Activated naive CD4-positive, alpha-beta T cell treated with anti-CD3 and anti-CD28 coated beads for 36 hours (primary cell): ENCODE measurements at regions of chr13 and their contacts with region 1.

Region 1: DNA sequence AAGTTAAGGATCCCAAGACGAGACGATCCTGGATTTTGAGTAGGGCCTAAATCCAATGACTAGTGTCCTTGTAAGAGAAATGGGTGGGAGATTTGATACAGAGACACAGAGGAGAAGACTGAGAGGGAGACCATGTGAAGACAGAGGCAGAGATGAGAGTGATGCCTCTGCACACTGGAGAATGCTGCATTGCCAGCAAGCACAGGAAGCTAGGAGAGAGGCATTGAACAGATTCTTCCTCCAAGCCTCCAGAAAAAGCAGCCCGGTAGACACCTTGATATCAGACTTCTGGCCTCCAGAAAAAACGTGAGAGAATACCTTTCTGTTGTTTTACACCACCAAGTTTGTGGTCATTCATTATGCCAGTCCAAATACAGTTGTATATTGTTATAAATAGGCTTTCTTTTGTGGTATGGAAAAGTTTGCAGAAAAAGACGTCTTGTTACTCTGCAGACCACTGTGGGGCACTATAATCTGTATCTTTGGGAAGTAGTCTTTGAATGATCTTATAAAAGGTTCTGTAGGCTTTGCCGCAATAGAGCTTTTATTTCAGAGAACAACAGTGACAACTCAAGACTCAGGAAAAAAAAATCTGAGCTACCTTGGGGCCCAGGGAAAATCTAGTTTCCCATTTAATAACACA is 17.9 kb upstream of the RFC3 start:
- DNase-seq: no peak
- H3K4me3 Mint-ChIP-seq: no peak overlapping the region
- H3K27ac Mint-ChIP-seq: no peak overlapping the region
- H3K4me1 Mint-ChIP-seq: peaks cover 7% of the 10 kb centered on the region
- H3K27me3 Mint-ChIP-seq: peaks cover 6% of the 10 kb centered on the region

Region 2: DNA sequence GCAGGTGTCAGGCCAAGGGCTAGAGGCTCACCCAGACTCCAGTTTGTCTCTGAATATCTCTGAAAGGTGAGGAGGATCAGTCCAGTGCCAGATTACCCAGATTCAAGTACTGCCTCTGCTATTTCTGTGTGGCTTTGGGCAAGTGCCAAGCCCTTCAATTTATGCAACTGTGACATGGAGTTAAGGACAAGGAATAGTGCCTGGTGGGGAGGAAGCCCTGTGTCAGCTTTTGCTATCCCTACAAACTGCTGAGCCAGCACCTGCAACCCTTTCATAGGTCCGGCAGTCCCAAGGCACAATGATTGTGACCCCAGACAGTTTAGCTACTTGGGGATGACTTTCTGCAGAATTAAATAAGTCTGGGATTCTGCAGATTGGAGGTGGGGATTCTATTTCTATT is 660.9 kb before region 1 on chr13:
- CTCF ChIA-PET with region 1: no interaction called
- intact Hi-C with region 1: no loop called
- DNase-seq: no peak
- H3K4me3 Mint-ChIP-seq: no peak overlapping the region
- H3K27ac Mint-ChIP-seq: no peak overlapping the region
- H3K4me1 Mint-ChIP-seq: no peaks in the 10 kb centered on the region
- H3K27me3 Mint-ChIP-seq: peaks cover 11% of the 10 kb centered on the region

Region 3: GRCh38 chr13:34076943-34077703 is 277.1 kb after region 1 on chr13:
- CTCF ChIA-PET with region 1: no interaction called
- intact Hi-C with region 1: loop called (anchors 5 kb)
- DNase-seq: no peak
- H3K4me3 Mint-ChIP-seq: no peak overlapping the region
- H3K27ac Mint-ChIP-seq: no peak overlapping the region
- H3K4me1 Mint-ChIP-seq: no peaks in the 10 kb centered on the region
- H3K27me3 Mint-ChIP-seq: no peaks in the 10 kb centered on the region

Region 4: DNA sequence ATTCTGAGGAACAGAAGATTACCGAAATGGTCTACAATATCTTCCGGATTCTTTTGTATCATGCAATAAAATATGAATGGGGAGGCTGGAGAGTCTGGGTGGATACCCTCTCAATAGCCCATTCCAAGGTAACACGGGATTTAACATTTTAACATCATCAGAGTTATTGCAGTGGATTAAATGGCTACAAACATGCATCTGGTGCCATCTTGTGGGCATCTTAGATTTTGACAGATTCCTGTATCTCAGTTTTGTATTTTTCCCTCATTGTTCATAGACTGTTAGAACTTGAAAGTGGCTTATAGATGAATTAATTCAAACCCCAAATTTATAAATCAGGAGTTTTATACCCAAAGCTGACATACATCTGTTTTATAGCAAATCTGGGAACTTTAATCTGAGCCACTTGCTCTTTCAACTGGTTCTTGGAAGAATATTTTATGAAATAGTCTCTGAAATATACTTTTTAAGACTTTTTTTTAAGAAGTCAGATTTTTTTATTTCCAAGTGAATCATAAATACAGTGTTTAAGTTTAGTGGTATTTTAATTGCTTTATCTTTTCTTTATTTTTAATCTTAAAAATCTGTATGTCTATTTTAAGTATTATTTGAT is 1357.2 kb after region 1 on chr13:
- CTCF ChIA-PET with region 1: interaction called, 5 read pairs
- intact Hi-C with region 1: loop called (anchors 1 kb)
- DNase-seq: peak; percentile 53
- H3K4me3 Mint-ChIP-seq: no peak overlapping the region
- H3K27ac Mint-ChIP-seq: no peak overlapping the region
- H3K4me1 Mint-ChIP-seq: peaks cover 3% of the 10 kb centered on the region
- H3K27me3 Mint-ChIP-seq: no peaks in the 10 kb centered on the region

Region 5: DNA sequence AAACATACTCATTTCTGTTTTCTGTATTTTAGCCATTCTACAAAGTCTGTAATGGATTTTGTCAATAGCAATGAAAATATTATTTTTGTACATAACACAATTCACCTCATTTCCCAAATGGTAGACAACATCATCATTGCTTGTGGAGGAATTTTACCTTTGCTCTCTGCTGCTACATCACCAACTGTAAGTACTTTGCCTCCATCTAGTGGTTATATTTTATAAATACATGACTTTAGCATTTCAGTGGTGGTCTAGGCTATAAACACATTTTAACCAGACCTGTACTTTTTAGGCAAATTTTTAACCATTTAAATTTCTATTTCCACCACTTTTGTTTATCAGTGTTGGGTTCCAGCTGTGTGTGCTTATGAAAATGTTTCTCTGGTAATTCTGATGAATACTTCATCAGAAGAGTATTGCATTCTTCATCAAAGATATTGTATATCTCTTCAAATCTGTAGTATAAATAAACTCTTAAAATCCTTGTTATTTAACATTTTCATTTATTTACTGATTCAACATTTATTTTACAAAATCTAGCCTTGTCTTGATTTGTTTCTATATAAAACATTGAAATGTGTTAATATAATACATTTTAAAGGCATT is 1364.4 kb after region 1 on chr13:
- CTCF ChIA-PET with region 1: no interaction called
- intact Hi-C with region 1: loop called (anchors 2 kb)
- DNase-seq: no peak
- H3K4me3 Mint-ChIP-seq: no peak overlapping the region
- H3K27ac Mint-ChIP-seq: no peak overlapping the region
- H3K4me1 Mint-ChIP-seq: peaks cover 6% of the 10 kb centered on the region
- H3K27me3 Mint-ChIP-seq: no peaks in the 10 kb centered on the region